HEK293 (cell line): ENCODE measurements at regions of chr6 and their contacts with region 1.

Region 1: GRCh38 chr6:126804332-126805064 is 314.0 kb upstream of the RSPO3 start:
- H3K4me3 ChIP-seq: no peak overlapping the region
- H3K27ac ChIP-seq: no peak overlapping the region
- H3K4me1 ChIP-seq: no peaks in the 10 kb centered on the region
- CTCF ChIP-seq: peak; percentile 45; the same call in 1 of the 2 replicates

Region 2: GRCh38 chr6:126773112-126773805 is 31.2 kb before region 1 on chr6:
- CTCF ChIA-PET with region 1: interaction called, 10 read pairs
- POLR2A ChIA-PET with region 1: no interaction called
- H3K4me3 ChIP-seq: no peak overlapping the region
- H3K27ac ChIP-seq: no peak overlapping the region
- H3K4me1 ChIP-seq: no peaks in the 10 kb centered on the region
- CTCF ChIP-seq: no peak

Region 3: GRCh38 chr6:126826166-126826714 is 21.7 kb after region 1 on chr6:
- CTCF ChIA-PET with region 1: interaction called, 10 read pairs
- POLR2A ChIA-PET with region 1: no interaction called
- H3K4me3 ChIP-seq: no peak overlapping the region
- H3K27ac ChIP-seq: no peak overlapping the region
- H3K4me1 ChIP-seq: peaks cover 5% of the 10 kb centered on the region; the same call in 1 of the 2 replicates
- CTCF ChIP-seq: no peak